AG04450 (cell line): ENCODE measurements at regions of chr9 and their contacts with region 1.

Region 1: DNA sequence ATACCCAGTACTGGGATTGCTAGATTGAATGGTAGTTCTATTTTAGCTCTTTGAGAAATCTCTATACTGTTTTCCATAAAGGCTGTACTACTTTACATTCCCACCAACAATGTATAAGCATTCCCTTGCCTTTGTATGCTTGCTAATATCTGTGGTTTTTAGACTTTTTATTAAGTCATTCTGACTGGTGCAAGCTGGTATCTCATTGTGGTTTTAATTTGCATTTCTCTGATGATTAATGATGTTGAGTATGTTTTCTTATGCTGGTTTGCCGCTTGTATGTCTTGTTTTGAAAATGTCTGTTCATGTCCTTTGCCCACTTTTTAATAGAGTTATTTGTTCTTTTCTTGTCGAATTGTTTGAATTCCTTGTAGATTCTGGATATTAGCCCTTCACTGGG is 512.7 kb upstream of the PAPPA start:
- DNase-seq: peak; percentile 42
- H3K4me3 ChIP-seq: no peak overlapping the region
- H3K27ac ChIP-seq: no peak overlapping the region
- H3K27me3 ChIP-seq: no peaks in the 10 kb centered on the region
- CTCF ChIP-seq: no peak

Region 2: DNA sequence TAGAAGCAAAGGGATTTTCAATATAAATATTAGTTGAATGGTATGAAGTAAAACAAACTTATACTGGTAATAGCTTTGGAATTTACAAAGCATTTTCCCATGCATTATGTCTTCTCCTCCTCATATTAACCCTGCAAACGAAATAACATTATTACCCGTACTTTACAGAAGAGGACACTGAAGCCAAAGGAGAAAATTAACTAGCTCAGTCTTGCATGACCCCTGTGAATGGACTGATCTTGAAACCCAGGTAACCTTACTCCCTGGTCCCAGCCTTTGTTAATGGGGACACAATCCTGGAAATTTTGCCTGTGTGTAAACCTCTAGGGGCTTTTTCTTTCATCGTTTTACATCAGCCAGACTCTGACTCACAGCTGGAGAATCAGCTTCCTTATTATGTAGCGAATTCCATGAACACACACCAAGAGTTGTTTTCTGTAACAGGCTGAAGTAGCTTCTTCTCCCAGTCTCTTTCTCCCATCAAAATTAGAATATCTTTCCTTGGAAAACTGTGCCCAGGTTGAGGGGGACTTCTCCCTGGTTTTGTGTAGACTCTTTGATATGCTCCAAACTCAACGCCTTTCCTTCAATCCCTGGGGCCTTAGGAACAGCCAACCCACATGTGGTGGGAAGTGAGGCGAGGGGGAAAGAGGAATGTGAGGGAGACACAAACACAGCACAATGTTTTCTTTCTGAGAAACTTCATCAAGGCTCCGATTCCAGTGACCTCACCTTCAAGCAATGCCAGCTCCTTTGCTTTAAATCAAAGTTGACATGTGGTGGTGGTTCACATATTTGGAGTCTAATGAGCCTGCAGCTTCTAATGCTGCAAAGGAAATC is 31.8 kb after region 1 on chr9:
- CTCF ChIA-PET with region 1: no interaction called
- POLR2A ChIA-PET with region 1: interaction called, 12 read pairs
- DNase-seq: peak; percentile 96
- H3K4me3 ChIP-seq: peak overlapping the region; percentile 5
- H3K27ac ChIP-seq: peak overlapping the region; percentile 100
- H3K27me3 ChIP-seq: no peaks in the 10 kb centered on the region
- CTCF ChIP-seq: 0 out of 2 replicates have a peak, but pooled peaks have one; percentile 6

Region 3: GRCh38 chr9:115694014-115694413 is 53.1 kb after region 1 on chr9:
- CTCF ChIA-PET with region 1: no interaction called
- POLR2A ChIA-PET with region 1: no interaction called
- DNase-seq: peak; percentile 78
- H3K4me3 ChIP-seq: no peak overlapping the region
- H3K27ac ChIP-seq: no peak overlapping the region
- H3K27me3 ChIP-seq: no peaks in the 10 kb centered on the region
- CTCF ChIP-seq: peak; percentile 54

Region 4: DNA sequence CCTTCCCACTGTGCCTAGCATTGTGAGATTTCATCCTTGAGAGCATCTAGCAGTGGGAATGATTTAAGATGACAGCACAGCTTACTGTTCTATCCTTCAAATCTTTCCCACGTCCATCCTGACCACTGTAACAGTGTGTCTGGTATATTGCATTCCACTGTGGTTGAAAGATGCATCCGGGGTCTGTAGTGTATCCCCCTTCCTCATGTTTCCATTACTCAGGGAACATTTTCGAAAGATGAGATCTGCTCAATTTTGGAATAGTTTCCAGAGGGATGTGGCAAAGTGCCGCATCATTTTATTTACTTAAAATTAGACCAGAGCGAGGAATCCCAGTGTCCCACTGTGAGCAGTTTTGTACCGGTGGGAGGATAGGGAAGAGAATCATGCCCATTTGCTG is 105.6 kb after region 1 on chr9:
- CTCF ChIA-PET with region 1: no interaction called
- POLR2A ChIA-PET with region 1: no interaction called
- DNase-seq: no peak
- H3K4me3 ChIP-seq: no peak overlapping the region
- H3K27ac ChIP-seq: no peak overlapping the region
- H3K27me3 ChIP-seq: no peaks in the 10 kb centered on the region
- CTCF ChIP-seq: no peak

Region 5: GRCh38 chr9:116156621-116157314 is 515.9 kb after region 1 on chr9:
- CTCF ChIA-PET with region 1: no interaction called
- POLR2A ChIA-PET with region 1: interaction called, 16 read pairs
- DNase-seq: no peak
- H3K4me3 ChIP-seq: peak overlapping the region; percentile 89
- H3K27ac ChIP-seq: peak overlapping the region; percentile 84
- H3K27me3 ChIP-seq: no peaks in the 10 kb centered on the region
- CTCF ChIP-seq: no peak